Activated T-helper 2 cell treated with anti-CD3 and anti-CD28 coated beads, Interferon-gamma antibody, Interleukin-2, Interleukin-4, amounts not matched to agents 10 μg/mL and 5 μg/mL and 100 μg/mL, durations not matched to agents 14 hours and 24 hours and 36 hours (primary cell): ENCODE measurements at regions of chr10 and their contacts with region 1.

Region 1: GRCh38 chr10:5094265-5095205 is at the start of gene AKR1C3:
- DNase-seq: no peak
- H3K4me3 Mint-ChIP-seq: peak within 1 kb of the TSS; percentile 50
- H3K27ac Mint-ChIP-seq: no peak within 1 kb of the TSS
- H3K4me1 Mint-ChIP-seq: peaks cover 7% of the 10 kb centered on the region
- H3K27me3 Mint-ChIP-seq: peaks cover 3% of the 10 kb centered on the region
- total RNA-seq, gene AKR1C3: 0.34 and 0.53 TPM in 2 replicates

Region 2: GRCh38 chr10:4686644-4686996 is 407.9 kb before region 1 on chr10:
- intact Hi-C with region 1: no loop called
- DNase-seq: no peak
- H3K4me3 Mint-ChIP-seq: no peak overlapping the region
- H3K27ac Mint-ChIP-seq: peak overlapping the region; percentile 73
- H3K4me1 Mint-ChIP-seq: peaks cover 15% of the 10 kb centered on the region
- H3K27me3 Mint-ChIP-seq: no peaks in the 10 kb centered on the region

Region 3: GRCh38 chr10:4953405-4953804 is 141.1 kb before region 1 on chr10:
- intact Hi-C with region 1: no loop called
- DNase-seq: no peak
- H3K4me3 Mint-ChIP-seq: no peak overlapping the region
- H3K27ac Mint-ChIP-seq: no peak overlapping the region
- H3K4me1 Mint-ChIP-seq: no peaks in the 10 kb centered on the region
- H3K27me3 Mint-ChIP-seq: no peaks in the 10 kb centered on the region

Region 4: GRCh38 chr10:5071411-5072198 is 22.9 kb before region 1 on chr10:
- intact Hi-C with region 1: no loop called
- DNase-seq: no peak
- H3K4me3 Mint-ChIP-seq: no peak overlapping the region
- H3K27ac Mint-ChIP-seq: no peak overlapping the region
- H3K4me1 Mint-ChIP-seq: no peaks in the 10 kb centered on the region
- H3K27me3 Mint-ChIP-seq: no peaks in the 10 kb centered on the region

Region 5: GRCh38 chr10:5283305-5284158 is 189.0 kb after region 1 on chr10:
- intact Hi-C with region 1: loop called (anchors 2 kb)
- DNase-seq: peak; percentile 50
- H3K4me3 Mint-ChIP-seq: no peak overlapping the region
- H3K27ac Mint-ChIP-seq: no peak overlapping the region
- H3K4me1 Mint-ChIP-seq: peaks cover 30% of the 10 kb centered on the region
- H3K27me3 Mint-ChIP-seq: no peaks in the 10 kb centered on the region

Region 6: GRCh38 chr10:5385224-5385623 is 290.7 kb after region 1 on chr10:
- intact Hi-C with region 1: loop called (anchors 1 kb)
- DNase-seq: no peak
- H3K4me3 Mint-ChIP-seq: no peak overlapping the region
- H3K27ac Mint-ChIP-seq: no peak overlapping the region
- H3K4me1 Mint-ChIP-seq: no peaks in the 10 kb centered on the region
- H3K27me3 Mint-ChIP-seq: peaks cover 3% of the 10 kb centered on the region

Region 7: DNA sequence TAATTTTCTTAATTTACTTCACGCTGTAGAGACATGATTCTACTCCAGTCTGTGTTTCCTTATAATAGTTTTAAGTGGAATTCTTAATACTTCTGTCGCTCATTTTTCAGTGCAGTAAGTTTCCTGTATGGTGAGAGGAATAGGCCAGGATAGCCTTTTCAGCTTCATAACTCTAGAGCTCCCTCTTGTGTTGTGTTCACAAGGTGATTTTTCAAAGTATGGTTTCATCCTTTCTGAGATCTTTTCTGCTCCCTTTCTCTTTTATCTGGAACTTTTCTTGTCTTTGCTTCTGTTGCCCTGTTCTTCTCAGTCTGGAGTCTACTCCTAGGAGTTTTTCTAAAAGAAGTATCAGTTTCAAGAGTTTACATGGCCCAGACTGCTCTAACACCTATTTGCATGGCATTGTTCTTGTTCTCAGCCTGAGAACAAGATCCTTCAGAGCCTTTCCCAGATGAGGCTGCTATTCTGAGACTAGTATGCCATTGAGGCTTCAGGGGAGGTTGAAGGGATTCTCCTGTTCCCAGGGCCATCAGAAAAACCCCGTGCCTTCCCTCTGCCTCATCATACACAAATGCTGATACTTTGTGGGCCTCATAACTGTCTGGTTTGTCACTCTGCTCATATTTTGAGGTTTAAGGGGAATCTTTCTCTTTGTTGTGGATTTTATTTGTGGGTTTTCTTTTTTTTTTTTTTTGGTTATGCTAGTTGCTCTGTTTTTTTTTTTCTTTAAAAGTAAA is 339.6 kb after region 1 on chr10:
- intact Hi-C with region 1: loop called (anchors 2 kb)
- DNase-seq: no peak
- H3K4me3 Mint-ChIP-seq: no peak overlapping the region
- H3K27ac Mint-ChIP-seq: no peak overlapping the region
- H3K4me1 Mint-ChIP-seq: peaks cover 18% of the 10 kb centered on the region
- H3K27me3 Mint-ChIP-seq: no peaks in the 10 kb centered on the region